ENCODE measurements at regions of chr9 and their contacts with region 1.

Region 1: GRCh38 chr9:6412487-6413364 is at the start of gene UHRF2:
- DNase-seq: peak; percentile 99
- H3K4me3 ChIP-seq: peak within 1 kb of the TSS; percentile 93 to 96
- H3K27ac ChIP-seq: peak within 1 kb of the TSS; percentile 86 to 90
- H3K4me1 ChIP-seq: peaks cover 0 to 30% (median 16%) of the 10 kb centered on the region in 4 donors
- H3K27me3 ChIP-seq: peaks cover 0 to 4% of the 10 kb centered on the region in 2 donors
- CTCF ChIP-seq: no peak

Region 2: GRCh38 chr9:6488395-6488794 is 75.7 kb after region 1 on chr9:
- intact Hi-C with region 1: loop called (anchors 10 kb)
- DNase-seq: no peak
- H3K4me3 ChIP-seq: no peak overlapping the region
- H3K27ac ChIP-seq: no peak overlapping the region
- H3K4me1 ChIP-seq: no peaks in the 10 kb centered on the region
- H3K27me3 ChIP-seq: no peaks in the 10 kb centered on the region
- CTCF ChIP-seq: no peak

Region 3: GRCh38 chr9:6566409-6567139 is 153.8 kb after region 1 on chr9:
- intact Hi-C with region 1: loop called (anchors 5 kb)
- DNase-seq: peak in 1 of 2 donors; percentile 26
- H3K4me3 ChIP-seq: peak overlapping the region in 1 of 2 donors; percentile 6
- H3K27ac ChIP-seq: peak overlapping the region; percentile 43 to 69
- H3K4me1 ChIP-seq: peaks cover 0 to 42% (median 27%) of the 10 kb centered on the region in 4 donors
- H3K27me3 ChIP-seq: no peaks in the 10 kb centered on the region
- CTCF ChIP-seq: no peak

Region 4: GRCh38 chr9:6757456-6758247 is 344.9 kb after region 1 on chr9 and contains the start of gene KDM4C:
- intact Hi-C with region 1: loop called (anchors 10 kb)
- DNase-seq: peak; percentile 96 to 97
- H3K4me3 ChIP-seq: peak within 1 kb of the TSS; percentile 83 to 98
- H3K27ac ChIP-seq: peak within 1 kb of the TSS; percentile 93 to 99
- H3K4me1 ChIP-seq: peaks cover 0 to 14% (median 7%) of the 10 kb centered on the region in 4 donors
- H3K27me3 ChIP-seq: no peaks in the 10 kb centered on the region
- CTCF ChIP-seq: no peak